ENCODE measurements at regions of chr1 and their contacts with region 1.

Region 1: GRCh38 chr1:179293340-179294327 is at the start of gene SOAT1:
- DNase-seq: peak; percentile 52
- H3K4me3 ChIP-seq: peak within 1 kb of the TSS; percentile 81
- CTCF ChIP-seq: no peak

Region 2: DNA sequence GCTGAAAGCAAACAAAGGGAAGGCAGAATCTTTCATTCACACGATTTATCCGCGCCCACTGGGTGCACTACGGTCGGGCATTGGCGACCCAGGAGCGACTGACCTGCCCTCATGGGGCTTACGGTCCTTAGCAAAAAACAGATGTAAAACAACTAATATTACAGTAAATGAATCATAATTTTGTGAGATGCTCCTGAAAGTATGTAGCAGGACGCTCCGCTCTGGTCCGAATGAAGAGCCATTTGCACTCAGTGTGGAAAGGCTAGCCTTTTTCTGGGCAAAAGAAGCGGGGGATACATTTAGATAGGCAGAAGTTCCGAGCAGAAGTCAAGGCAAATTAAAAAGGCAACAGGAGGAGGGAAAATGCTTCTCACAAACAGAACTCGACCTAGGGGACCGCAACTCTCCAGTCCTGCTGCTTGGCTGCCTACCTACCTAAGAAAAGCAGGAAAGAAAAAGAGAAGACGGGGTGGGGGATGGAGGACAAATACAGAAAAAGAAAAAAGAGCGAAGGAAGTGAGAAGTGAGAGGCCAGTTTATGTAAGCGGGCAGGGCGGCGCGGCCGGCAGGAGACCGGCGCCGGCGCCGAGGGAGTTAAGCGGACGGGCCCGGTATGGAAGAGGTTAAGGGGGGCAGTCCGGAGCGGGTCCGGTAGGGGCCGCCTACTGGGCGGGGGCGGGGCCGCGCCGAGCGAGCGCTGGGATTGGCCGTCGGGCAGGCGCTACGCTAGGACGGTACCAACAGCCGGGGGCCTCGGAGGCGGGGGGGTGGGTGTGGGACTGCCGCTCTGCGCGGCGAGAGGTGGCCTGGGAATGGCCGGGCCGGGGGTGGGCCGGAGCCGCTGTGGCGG is 268.3 kb before region 1 on chr1 and contains the start of gene FAM20B:
- in situ Hi-C with region 1: no loop called
- DNase-seq: peak; percentile 70
- H3K4me3 ChIP-seq: peak within 1 kb of the TSS; percentile 90
- CTCF ChIP-seq: no peak

Region 3: DNA sequence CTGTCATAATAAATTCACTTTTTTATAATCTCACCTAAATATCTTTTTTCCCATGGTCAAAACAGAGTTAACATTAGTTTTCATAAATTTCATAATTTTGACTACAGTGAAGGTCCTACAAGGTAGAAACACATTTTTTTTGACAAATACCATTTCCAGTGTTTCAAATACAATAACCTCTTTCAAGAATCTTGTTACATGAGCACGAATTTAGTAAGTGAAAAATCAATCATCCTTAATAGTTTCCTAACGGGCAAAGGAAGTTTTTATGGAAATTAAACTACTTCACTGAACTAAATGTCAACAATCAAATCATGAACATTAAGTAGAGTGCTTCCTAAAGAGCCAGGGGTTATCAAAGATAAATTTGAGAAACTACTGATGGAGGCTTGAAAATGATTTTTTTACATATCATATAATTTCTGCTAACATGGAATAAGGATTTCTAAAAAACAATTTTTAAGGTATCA is 99.5 kb before region 1 on chr1:
- in situ Hi-C with region 1: no loop called
- DNase-seq: no peak
- H3K4me3 ChIP-seq: no peak overlapping the region
- CTCF ChIP-seq: no peak

Region 4: GRCh38 chr1:179329862-179330261 is 36.2 kb after region 1 on chr1:
- in situ Hi-C with region 1: no loop called
- DNase-seq: no peak
- H3K4me3 ChIP-seq: no peak overlapping the region
- CTCF ChIP-seq: no peak

Region 5: DNA sequence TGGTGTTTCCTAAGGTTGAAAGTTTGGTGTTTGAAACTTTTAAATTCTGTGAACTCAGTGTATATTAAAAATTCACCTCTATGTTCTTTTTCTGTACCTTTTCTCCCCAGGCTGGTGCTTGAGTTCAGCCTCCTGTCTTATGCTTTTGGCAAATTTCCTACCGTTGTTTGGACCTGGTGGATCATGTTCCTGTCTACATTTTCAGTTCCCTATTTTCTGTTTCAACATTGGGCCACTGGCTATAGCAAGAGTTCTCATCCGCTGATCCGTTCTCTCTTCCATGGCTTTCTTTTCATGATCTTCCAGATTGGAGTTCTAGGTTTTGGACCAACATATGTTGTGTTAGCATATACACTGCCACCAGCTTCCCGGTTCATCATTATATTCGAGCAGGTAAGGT is 47.3 kb after region 1 on chr1:
- in situ Hi-C with region 1: no loop called
- DNase-seq: no peak
- H3K4me3 ChIP-seq: no peak overlapping the region
- CTCF ChIP-seq: no peak

Region 6: DNA sequence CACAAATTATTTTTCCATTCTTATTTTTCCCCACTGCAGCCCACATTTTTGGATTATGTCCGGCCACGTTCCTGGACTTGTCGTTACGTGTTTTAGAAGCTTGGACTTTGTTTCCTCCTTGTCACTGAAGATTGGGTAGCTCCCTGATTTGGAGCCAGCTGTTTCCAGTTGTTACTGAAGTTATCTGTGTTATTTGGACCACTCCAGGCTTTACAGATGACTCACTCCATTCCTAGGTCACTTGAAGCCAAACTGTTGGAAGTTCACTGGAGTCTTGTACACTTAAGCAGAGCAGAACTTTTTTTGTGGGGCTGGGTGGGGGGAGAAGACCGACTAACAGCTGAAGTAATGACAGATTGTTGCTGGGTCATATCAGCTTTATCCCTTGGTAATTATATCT is 59.9 kb after region 1 on chr1:
- in situ Hi-C with region 1: loop called (anchors 5 kb)
- DNase-seq: peak; percentile 15
- H3K4me3 ChIP-seq: no peak overlapping the region
- CTCF ChIP-seq: no peak